CD8-positive, alpha-beta T cell (primary cell): ENCODE measurements at regions of chr7 and their contacts with region 1.

Region 1: DNA sequence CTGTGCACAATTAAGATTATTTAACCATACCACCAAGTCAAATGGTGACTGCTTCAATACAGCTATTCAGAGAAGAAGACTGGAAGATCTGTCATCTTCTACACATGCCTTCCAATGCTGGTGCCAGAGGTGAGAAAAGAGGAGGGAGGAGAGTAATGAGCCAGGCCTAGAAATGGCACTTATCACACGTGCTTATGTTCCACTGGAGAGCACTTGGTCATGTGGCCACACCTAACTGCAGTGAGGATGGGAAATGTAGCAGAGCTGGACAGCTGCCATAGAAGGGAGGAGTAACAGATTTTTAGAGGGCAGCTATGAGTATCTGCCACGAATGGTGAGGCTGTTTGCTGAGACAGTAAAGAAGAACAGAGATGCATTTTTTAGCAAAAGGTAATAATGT is 77.1 kb downstream of the MPLKIP start:
- DNase-seq: no peak
- ATAC-seq: no peak
- H3K4me3 ChIP-seq: no peak overlapping the region
- H3K4me3 Mint-ChIP-seq: no peak overlapping the region
- H3K27ac ChIP-seq: no peak overlapping the region
- H3K27ac Mint-ChIP-seq: no peak overlapping the region
- H3K4me1 ChIP-seq: no peaks in the 10 kb centered on the region
- H3K4me1 Mint-ChIP-seq: peaks cover 8% of the 10 kb centered on the region
- H3K27me3 ChIP-seq: no peaks in the 10 kb centered on the region
- H3K27me3 Mint-ChIP-seq: no peaks in the 10 kb centered on the region
- CTCF ChIP-seq: no peak

Region 2: GRCh38 chr7:39904077-39904486 is 153.2 kb before region 1 on chr7:
- CTCF ChIA-PET with region 1: interaction called, 215 read pairs
- POLR2A ChIA-PET with region 1: no interaction called
- intact Hi-C with region 1: no loop called
- DNase-seq: no peak
- ATAC-seq: no peak
- H3K4me3 ChIP-seq: no peak overlapping the region
- H3K4me3 Mint-ChIP-seq: no peak overlapping the region
- H3K27ac ChIP-seq: no peak overlapping the region
- H3K27ac Mint-ChIP-seq: no peak overlapping the region
- H3K4me1 ChIP-seq: no peaks in the 10 kb centered on the region
- H3K4me1 Mint-ChIP-seq: no peaks in the 10 kb centered on the region
- H3K27me3 ChIP-seq: no peaks in the 10 kb centered on the region
- H3K27me3 Mint-ChIP-seq: peaks cover 6% of the 10 kb centered on the region
- CTCF ChIP-seq: no peak

Region 3: DNA sequence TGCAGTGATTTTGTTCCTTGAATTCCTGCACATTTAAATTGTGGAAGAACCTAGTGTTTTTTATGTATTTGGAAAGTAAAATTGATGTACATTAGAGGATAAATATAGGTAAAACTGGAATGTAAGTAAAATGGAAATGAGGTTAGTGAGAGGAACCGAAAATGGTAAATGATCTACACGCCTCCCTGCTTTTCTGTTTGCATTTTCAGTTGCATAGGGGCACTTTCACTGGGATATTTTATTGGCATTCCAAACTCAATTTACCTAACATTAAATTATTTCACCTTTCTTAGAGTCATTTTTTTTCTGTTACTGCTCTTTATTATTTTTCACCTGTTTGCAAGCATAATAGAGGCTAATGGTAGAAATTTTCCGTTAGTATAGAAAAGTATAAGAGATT is 99.3 kb before region 1 on chr7:
- CTCF ChIA-PET with region 1: interaction called, 17 read pairs
- POLR2A ChIA-PET with region 1: interaction called, 3 read pairs
- intact Hi-C with region 1: no loop called
- DNase-seq: no peak
- ATAC-seq: no peak
- H3K4me3 ChIP-seq: no peak overlapping the region
- H3K4me3 Mint-ChIP-seq: no peak overlapping the region
- H3K27ac ChIP-seq: no peak overlapping the region
- H3K27ac Mint-ChIP-seq: no peak overlapping the region
- H3K4me1 ChIP-seq: peaks cover 51% of the 10 kb centered on the region
- H3K4me1 Mint-ChIP-seq: peaks cover 84% of the 10 kb centered on the region
- H3K27me3 ChIP-seq: no peaks in the 10 kb centered on the region
- H3K27me3 Mint-ChIP-seq: no peaks in the 10 kb centered on the region
- CTCF ChIP-seq: no peak

Region 4: DNA sequence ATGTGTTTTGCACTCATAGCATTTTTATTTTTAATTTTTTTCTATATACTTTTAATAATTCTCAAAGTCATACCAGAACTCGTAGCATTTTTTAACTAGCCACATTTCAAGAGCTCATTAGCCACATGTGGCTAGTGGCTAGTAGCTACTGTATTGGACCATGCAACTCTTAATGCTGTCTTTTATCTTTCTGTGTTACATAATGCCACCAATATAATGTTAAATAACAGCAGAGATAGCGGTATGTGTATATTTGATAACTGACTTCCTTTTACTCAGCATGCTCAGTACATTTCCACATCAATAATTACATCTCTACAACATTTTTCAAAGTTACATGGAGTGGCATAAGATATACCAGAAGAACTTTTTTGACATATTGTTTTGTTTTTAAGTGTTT is 15.8 kb before region 1 on chr7:
- CTCF ChIA-PET with region 1: interaction called, 13 read pairs
- POLR2A ChIA-PET with region 1: no interaction called
- intact Hi-C with region 1: no loop called
- DNase-seq: no peak
- ATAC-seq: no peak
- H3K4me3 ChIP-seq: no peak overlapping the region
- H3K4me3 Mint-ChIP-seq: no peak overlapping the region
- H3K27ac ChIP-seq: no peak overlapping the region
- H3K27ac Mint-ChIP-seq: no peak overlapping the region
- H3K4me1 ChIP-seq: no peaks in the 10 kb centered on the region
- H3K4me1 Mint-ChIP-seq: peaks cover 24% of the 10 kb centered on the region
- H3K27me3 ChIP-seq: no peaks in the 10 kb centered on the region
- H3K27me3 Mint-ChIP-seq: no peaks in the 10 kb centered on the region
- CTCF ChIP-seq: no peak

Region 5: GRCh38 chr7:40571796-40572195 is 514.5 kb after region 1 on chr7:
- CTCF ChIA-PET with region 1: no interaction called
- POLR2A ChIA-PET with region 1: no interaction called
- intact Hi-C with region 1: no loop called
- DNase-seq: no peak
- ATAC-seq: no peak
- H3K4me3 ChIP-seq: no peak overlapping the region
- H3K4me3 Mint-ChIP-seq: no peak overlapping the region
- H3K27ac ChIP-seq: no peak overlapping the region
- H3K27ac Mint-ChIP-seq: no peak overlapping the region
- H3K4me1 ChIP-seq: no peaks in the 10 kb centered on the region
- H3K4me1 Mint-ChIP-seq: no peaks in the 10 kb centered on the region
- H3K27me3 ChIP-seq: no peaks in the 10 kb centered on the region
- H3K27me3 Mint-ChIP-seq: no peaks in the 10 kb centered on the region
- CTCF ChIP-seq: no peak